Activated T-helper 1 cell treated with anti-CD3 and anti-CD28 coated beads, Interleukin-12 subunit alpha, Interleukin-12 subunit beta, Interleukin-2, Interleukin-4 antibody, amounts not matched to agents 30 ng/mL and 10 ng/mL and 1 ng/mL, durations not matched to agents 14 hours and 24 hours and 36 hours (primary cell): ENCODE measurements at regions of chr4 and their contacts with region 1.

Region 1: GRCh38 chr4:121227341-121227792 is 63.2 kb upstream of the TNIP3 start:
- DNase-seq: no peak
- H3K4me3 Mint-ChIP-seq: peak overlapping the region; percentile 76
- H3K27ac Mint-ChIP-seq: peak overlapping the region; percentile 83
- H3K4me1 Mint-ChIP-seq: peaks cover 38% of the 10 kb centered on the region
- H3K27me3 Mint-ChIP-seq: no peaks in the 10 kb centered on the region

Region 2: GRCh38 chr4:119559044-119559647 is 1668.2 kb before region 1 on chr4:
- intact Hi-C with region 1: no loop called
- DNase-seq: no peak
- H3K4me3 Mint-ChIP-seq: no peak overlapping the region
- H3K27ac Mint-ChIP-seq: no peak overlapping the region
- H3K4me1 Mint-ChIP-seq: no peaks in the 10 kb centered on the region
- H3K27me3 Mint-ChIP-seq: no peaks in the 10 kb centered on the region

Region 3: GRCh38 chr4:120589787-120590186 is 637.6 kb before region 1 on chr4:
- intact Hi-C with region 1: no loop called
- DNase-seq: no peak
- H3K4me3 Mint-ChIP-seq: no peak overlapping the region
- H3K27ac Mint-ChIP-seq: no peak overlapping the region
- H3K4me1 Mint-ChIP-seq: no peaks in the 10 kb centered on the region
- H3K27me3 Mint-ChIP-seq: no peaks in the 10 kb centered on the region

Region 4: DNA sequence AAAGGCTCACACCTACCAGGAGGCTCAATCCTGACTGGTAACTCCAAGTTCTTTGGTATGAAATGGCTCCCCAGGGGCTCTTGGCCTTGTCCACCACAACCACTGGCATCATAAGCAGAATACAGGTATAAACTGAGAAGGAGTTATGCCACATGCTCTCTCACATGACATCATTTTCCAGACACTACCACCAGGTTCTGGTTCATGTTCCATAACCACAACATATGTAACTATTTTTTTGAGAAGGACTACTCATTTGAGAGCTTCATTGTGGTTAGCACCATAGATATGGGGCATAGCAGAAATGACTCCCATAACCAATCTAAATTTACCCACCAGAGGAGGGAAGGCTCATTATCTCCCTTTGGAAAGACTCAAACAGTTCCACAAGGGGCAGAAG is 324.4 kb before region 1 on chr4:
- intact Hi-C with region 1: loop called (anchors 1 kb)
- DNase-seq: no peak
- H3K4me3 Mint-ChIP-seq: no peak overlapping the region
- H3K27ac Mint-ChIP-seq: no peak overlapping the region
- H3K4me1 Mint-ChIP-seq: no peaks in the 10 kb centered on the region
- H3K27me3 Mint-ChIP-seq: peaks cover 8% of the 10 kb centered on the region

Region 5: DNA sequence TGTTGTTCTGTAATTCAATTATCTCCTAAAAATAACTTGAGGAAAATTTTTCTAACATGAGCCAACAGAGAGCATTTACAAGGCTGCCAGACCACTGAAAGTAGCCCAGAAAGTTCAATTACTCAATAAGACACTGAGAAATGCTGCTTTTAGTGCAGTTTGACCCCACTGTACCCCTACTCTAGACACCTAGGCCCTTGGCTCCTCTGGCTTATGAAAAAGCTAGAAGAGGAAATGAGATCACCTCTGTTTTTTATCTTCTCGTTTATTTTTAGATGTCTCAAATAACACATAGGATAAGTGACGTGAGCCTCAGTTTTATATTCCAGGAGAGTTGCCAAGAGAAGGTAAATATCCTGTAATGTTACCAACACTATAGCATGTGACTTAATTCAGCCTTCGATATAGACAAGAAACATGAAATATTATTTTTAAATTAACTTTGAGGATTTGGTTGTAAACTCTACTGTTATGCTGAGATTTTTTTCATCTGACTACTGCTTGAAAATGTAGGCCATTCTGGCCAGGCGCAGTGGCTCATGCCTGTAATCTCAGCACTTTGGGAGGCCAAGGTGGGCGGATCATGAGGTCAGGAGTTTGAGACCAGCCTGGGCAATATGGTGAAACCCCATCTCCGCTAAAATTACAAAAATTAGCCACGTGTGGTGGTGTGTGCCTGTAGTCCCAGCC is 87.7 kb before region 1 on chr4:
- intact Hi-C with region 1: loop called (anchors 1 kb)
- DNase-seq: no peak
- H3K4me3 Mint-ChIP-seq: peak overlapping the region; percentile 31
- H3K27ac Mint-ChIP-seq: peak overlapping the region; percentile 69
- H3K4me1 Mint-ChIP-seq: peaks cover 41% of the 10 kb centered on the region
- H3K27me3 Mint-ChIP-seq: no peaks in the 10 kb centered on the region

Region 6: DNA sequence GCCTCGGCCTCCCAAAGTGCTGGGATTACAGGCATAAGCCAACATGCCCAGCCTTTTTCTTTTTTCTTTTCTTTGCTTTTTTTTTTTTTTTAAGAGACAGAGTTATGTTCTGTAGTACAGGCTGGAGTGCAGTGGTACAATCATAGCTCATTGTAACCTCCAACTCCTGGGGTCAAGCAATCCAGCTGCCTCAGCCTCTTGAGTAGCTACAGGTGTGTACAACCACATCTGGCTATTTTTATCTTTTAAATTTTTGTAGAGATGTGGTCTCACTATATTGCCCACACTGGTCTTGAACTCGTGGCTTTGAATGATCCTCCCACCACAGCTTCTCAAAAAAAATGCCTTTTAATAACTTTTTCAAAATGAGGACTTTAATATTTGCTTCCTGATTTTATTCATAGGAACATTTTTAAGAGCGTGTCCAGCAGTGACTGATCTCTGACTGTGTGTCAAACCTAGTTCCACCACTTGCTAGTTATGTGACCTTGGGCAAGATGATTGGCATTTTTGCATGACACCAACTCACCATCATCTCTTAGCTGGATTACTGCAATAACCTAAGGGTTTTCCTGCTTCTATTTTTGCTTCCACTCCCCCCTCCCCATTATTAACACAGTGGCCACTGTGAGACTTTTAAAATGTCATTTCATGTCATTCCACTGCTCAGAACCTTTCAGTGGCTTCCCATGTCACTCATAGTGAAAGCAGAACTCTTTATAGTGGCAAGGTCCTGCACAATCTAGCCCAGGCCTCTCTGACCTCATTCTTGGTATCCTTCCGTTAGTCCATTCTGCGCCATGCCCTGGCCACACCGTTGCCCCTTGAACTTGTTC is 58.7 kb before region 1 on chr4:
- intact Hi-C with region 1: no loop called
- DNase-seq: no peak
- H3K4me3 Mint-ChIP-seq: no peak overlapping the region
- H3K27ac Mint-ChIP-seq: no peak overlapping the region
- H3K4me1 Mint-ChIP-seq: peaks cover 52% of the 10 kb centered on the region
- H3K27me3 Mint-ChIP-seq: no peaks in the 10 kb centered on the region

Region 7: DNA sequence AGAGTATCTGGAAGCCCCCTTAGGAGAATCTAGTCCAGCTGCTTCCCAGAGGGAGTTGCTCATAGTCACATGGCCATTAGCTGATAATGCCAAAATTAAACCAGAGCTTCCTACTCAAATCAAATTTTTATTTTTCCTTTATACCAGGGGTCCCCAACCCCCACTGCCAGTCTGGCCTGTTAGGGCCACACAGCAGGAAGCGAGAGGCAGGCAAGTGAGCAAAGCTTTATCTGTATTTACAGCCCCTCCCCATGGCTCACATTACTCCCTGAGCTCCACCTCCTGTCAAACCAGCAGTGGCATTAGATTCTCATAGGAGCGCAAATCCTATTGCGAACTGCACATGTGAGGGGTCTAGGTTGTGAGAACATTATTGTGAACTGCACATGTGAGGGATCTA is 44.0 kb before region 1 on chr4:
- intact Hi-C with region 1: no loop called
- DNase-seq: no peak
- H3K4me3 Mint-ChIP-seq: no peak overlapping the region
- H3K27ac Mint-ChIP-seq: no peak overlapping the region
- H3K4me1 Mint-ChIP-seq: peaks cover 72% of the 10 kb centered on the region
- H3K27me3 Mint-ChIP-seq: no peaks in the 10 kb centered on the region

Region 8: GRCh38 chr4:121199742-121200561 is 27.4 kb before region 1 on chr4:
- intact Hi-C with region 1: loop called (anchors 2 kb)
- DNase-seq: no peak
- H3K4me3 Mint-ChIP-seq: no peak overlapping the region
- H3K27ac Mint-ChIP-seq: no peak overlapping the region
- H3K4me1 Mint-ChIP-seq: peaks cover 26% of the 10 kb centered on the region
- H3K27me3 Mint-ChIP-seq: peaks cover 10% of the 10 kb centered on the region

Region 9: DNA sequence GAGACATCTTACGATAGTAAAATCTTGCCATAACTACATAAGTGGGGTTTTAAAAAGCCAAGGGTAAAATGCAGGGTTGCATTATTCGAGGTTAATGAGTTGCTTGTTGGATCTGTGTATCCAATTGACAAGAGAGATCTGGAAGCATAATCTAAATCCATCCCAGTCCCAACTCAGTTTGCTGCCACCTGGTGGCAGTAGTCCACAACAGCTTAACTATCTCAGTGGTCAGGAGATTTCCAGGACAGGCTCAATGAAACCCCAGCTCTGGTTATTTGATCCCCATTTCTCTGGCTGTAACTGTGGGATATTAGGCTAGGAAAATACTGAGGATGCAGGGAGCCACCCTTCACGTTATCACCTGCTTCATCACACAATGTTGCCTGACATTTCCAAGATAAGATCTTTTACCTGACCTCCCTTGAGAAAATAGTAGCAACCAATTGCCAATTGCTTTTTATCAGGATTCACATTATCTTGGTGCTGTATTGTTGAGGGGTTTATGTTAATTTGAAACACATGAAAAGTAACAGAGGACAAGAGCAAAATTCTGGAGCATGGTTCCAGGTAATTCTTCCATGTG is 24.9 kb after region 1 on chr4:
- intact Hi-C with region 1: loop called (anchors 1 kb)
- DNase-seq: peak; percentile 21
- H3K4me3 Mint-ChIP-seq: no peak overlapping the region
- H3K27ac Mint-ChIP-seq: no peak overlapping the region
- H3K4me1 Mint-ChIP-seq: peaks cover 66% of the 10 kb centered on the region
- H3K27me3 Mint-ChIP-seq: peaks cover 6% of the 10 kb centered on the region

Region 10: DNA sequence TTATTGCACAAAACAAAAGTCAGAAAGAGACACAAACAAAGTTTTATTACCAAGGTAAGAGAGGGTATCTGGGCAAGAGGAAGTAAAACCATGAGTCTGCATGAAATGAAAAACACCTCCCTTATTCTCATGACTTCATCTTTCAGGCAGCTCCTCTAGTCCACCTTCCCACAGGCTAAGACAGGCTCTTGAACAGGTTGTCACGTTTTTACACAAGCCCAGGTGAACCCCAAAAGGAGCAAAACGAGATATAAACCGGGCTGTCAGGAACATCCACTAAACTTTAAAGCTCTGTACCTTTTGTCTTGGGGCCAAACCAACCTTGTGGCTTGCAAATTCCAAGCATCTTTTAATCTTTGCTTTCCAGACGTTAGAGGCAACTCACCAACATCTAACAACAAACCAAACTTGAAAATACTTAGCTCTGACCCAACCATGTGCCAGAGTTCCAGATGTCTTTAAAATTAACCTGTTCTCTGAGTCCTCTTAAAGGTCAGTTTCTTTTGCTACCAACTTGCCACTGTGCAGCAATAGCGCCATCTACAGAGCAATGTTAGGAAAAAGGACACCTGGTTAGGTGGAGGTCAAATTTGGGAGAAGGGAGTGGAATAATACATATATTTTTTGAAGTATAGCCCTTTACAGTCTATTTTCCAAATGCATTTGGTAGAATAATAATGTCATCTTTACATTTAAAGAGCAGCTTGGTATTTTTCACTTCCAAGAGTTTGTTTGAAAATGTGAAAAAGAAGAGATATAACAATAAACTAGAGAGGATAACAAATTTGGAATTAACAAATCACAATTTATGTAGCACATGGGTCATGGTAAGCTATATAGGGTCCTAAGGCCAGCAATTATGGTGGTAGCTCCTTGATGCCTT is 80.3 kb after region 1 on chr4:
- intact Hi-C with region 1: loop called (anchors 1 kb)
- DNase-seq: peak; percentile 27
- H3K4me3 Mint-ChIP-seq: no peak overlapping the region
- H3K27ac Mint-ChIP-seq: peak overlapping the region; percentile 25
- H3K4me1 Mint-ChIP-seq: peaks cover 16% of the 10 kb centered on the region
- H3K27me3 Mint-ChIP-seq: peaks cover 14% of the 10 kb centered on the region